Caco-2 (cell line): ENCODE measurements at regions of chr7 and their contacts with region 1.

Region 1: GRCh38 chr7:92447345-92448204 is at the start of gene GATAD1:
- DNase-seq: peak; percentile 94 to 95
- H3K4me3 ChIP-seq: peak within 1 kb of the TSS; percentile 89
- H3K4me3 Mint-ChIP-seq: peak within 1 kb of the TSS; percentile 82
- H3K27ac Mint-ChIP-seq: peak within 1 kb of the TSS; percentile 86
- H3K4me1 ChIP-seq: peaks cover 16% of the 10 kb centered on the region
- H3K4me1 Mint-ChIP-seq: peaks cover 9% of the 10 kb centered on the region
- H3K27me3 ChIP-seq: no peaks in the 10 kb centered on the region
- H3K27me3 Mint-ChIP-seq: no peaks in the 10 kb centered on the region
- CTCF ChIP-seq: peak in 1 of 2 experiments; percentile 86
- total RNA-seq, gene GATAD1: 36.7 and 38.2 TPM in 2 replicates

Region 2: GRCh38 chr7:92057362-92057761 is 390.2 kb before region 1 on chr7:
- CTCF ChIA-PET with region 1: no interaction called
- POLR2A ChIA-PET with region 1: no interaction called
- intact Hi-C with region 1: loop called (anchors 5 kb)
- DNase-seq: peak; percentile 74 to 78
- H3K4me3 ChIP-seq: no peak overlapping the region
- H3K4me3 Mint-ChIP-seq: peak overlapping the region; percentile 49
- H3K27ac Mint-ChIP-seq: peak overlapping the region; percentile 55
- H3K4me1 ChIP-seq: peaks cover 51% of the 10 kb centered on the region
- H3K4me1 Mint-ChIP-seq: peaks cover 16% of the 10 kb centered on the region
- H3K27me3 ChIP-seq: no peaks in the 10 kb centered on the region
- H3K27me3 Mint-ChIP-seq: no peaks in the 10 kb centered on the region
- CTCF ChIP-seq: no peak

Region 3: GRCh38 chr7:92200791-92201190 is 246.8 kb before region 1 on chr7:
- CTCF ChIA-PET with region 1: no interaction called
- POLR2A ChIA-PET with region 1: no interaction called
- intact Hi-C with region 1: loop called (anchors 5 kb)
- DNase-seq: peak in 1 of 2 experiments; percentile 15
- H3K4me3 ChIP-seq: no peak overlapping the region
- H3K4me3 Mint-ChIP-seq: no peak overlapping the region
- H3K27ac Mint-ChIP-seq: no peak overlapping the region
- H3K4me1 ChIP-seq: no peaks in the 10 kb centered on the region; the same call in 1 of the 2 replicates
- H3K4me1 Mint-ChIP-seq: no peaks in the 10 kb centered on the region
- H3K27me3 ChIP-seq: no peaks in the 10 kb centered on the region
- H3K27me3 Mint-ChIP-seq: no peaks in the 10 kb centered on the region
- CTCF ChIP-seq: peak in 1 of 2 experiments; percentile 34

Region 4: GRCh38 chr7:92425321-92425947 is 22.1 kb before region 1 on chr7:
- CTCF ChIA-PET with region 1: interaction called, 74 read pairs
- POLR2A ChIA-PET with region 1: interaction called, 31 read pairs
- intact Hi-C with region 1: loop called (anchors 1 kb)
- DNase-seq: peak; percentile 59 to 60
- H3K4me3 ChIP-seq: peak overlapping the region; percentile 50
- H3K4me3 Mint-ChIP-seq: peak overlapping the region; percentile 54
- H3K27ac Mint-ChIP-seq: peak overlapping the region; percentile 74
- H3K4me1 ChIP-seq: no peaks in the 10 kb centered on the region
- H3K4me1 Mint-ChIP-seq: peaks cover 9% of the 10 kb centered on the region
- H3K27me3 ChIP-seq: no peaks in the 10 kb centered on the region; the same call in 1 of the 2 replicates
- H3K27me3 Mint-ChIP-seq: no peaks in the 10 kb centered on the region
- CTCF ChIP-seq: peak in 1 of 2 experiments; percentile 32

Region 5: GRCh38 chr7:92461027-92462003 is 13.7 kb after region 1 on chr7:
- CTCF ChIA-PET with region 1: interaction called, 16 read pairs
- POLR2A ChIA-PET with region 1: interaction called, 11 read pairs
- intact Hi-C with region 1: loop called (anchors 1 kb)
- DNase-seq: peak in 1 of 2 experiments; percentile 45
- H3K4me3 ChIP-seq: no peak overlapping the region
- H3K4me3 Mint-ChIP-seq: no peak overlapping the region
- H3K27ac Mint-ChIP-seq: no peak overlapping the region
- H3K4me1 ChIP-seq: peaks cover 14% of the 10 kb centered on the region
- H3K4me1 Mint-ChIP-seq: peaks cover 22% of the 10 kb centered on the region
- H3K27me3 ChIP-seq: no peaks in the 10 kb centered on the region
- H3K27me3 Mint-ChIP-seq: no peaks in the 10 kb centered on the region
- CTCF ChIP-seq: peak; percentile 73 to 87

Region 6: DNA sequence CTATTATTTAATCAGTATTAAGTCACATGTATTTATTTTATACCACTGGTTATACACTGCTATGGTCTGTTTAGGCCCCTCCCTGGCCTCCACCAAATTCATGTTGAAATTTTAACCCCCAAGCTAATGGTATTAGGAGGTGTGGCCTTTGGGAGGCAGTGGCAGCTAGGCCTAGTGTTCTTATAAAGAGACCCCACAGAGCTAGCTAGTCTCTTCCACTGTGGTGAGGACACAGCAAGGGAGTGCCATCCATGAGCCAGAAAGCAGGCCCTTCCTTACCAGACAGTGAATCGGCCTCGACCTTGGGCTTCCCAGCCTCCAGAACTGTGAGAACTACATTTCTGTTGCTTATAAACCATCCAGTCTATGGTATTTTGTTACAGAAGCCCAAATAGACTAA is 109.7 kb after region 1 on chr7:
- CTCF ChIA-PET with region 1: no interaction called
- POLR2A ChIA-PET with region 1: no interaction called
- intact Hi-C with region 1: no loop called
- DNase-seq: no peak
- H3K4me3 ChIP-seq: no peak overlapping the region
- H3K4me3 Mint-ChIP-seq: no peak overlapping the region
- H3K27ac Mint-ChIP-seq: no peak overlapping the region
- H3K4me1 ChIP-seq: peaks cover 9% of the 10 kb centered on the region
- H3K4me1 Mint-ChIP-seq: no peaks in the 10 kb centered on the region
- H3K27me3 ChIP-seq: no peaks in the 10 kb centered on the region
- H3K27me3 Mint-ChIP-seq: no peaks in the 10 kb centered on the region
- CTCF ChIP-seq: no peak

Region 7: DNA sequence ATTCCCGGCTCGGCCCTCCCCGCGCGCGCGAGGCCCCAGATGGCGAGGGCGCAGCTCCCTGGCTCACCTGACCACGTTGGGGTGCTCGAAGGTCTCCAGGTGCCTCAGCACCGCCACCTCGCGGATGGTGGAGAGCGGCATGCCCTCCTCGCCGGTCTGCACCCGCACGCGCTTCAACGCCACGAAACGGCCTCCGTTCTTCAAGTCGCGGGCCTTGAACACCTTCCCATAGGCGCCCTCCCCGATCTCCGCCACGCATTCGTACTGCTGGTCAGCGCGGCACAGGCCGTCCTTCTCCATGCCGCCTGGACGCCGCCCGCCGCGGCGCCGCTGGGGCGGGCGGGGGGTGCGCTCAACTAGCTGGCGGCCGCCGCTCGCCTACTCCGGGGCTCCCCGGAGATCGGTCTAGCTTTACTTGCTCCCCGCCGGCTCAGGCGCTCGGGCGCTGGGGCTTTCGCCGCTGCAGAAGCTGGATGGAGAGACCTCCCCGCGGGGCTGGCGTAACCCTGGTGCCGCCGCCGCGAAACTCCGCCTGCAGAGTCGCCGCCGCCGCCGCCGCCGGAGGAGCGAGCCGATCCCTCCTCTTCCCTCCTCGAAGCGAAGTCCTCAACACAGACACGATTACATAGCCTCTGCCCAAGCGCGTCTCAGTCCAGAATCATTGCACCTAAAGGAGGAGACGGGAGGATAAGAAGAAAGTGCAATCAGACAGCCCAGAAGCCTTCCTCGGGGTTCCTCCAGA is 385.6 kb after region 1 on chr7:
- CTCF ChIA-PET with region 1: interaction called, 12 read pairs
- POLR2A ChIA-PET with region 1: no interaction called
- intact Hi-C with region 1: no loop called
- DNase-seq: peak; percentile 91 to 94
- H3K4me3 ChIP-seq: peak overlapping the region; percentile 79
- H3K4me3 Mint-ChIP-seq: peak overlapping the region; percentile 86
- H3K27ac Mint-ChIP-seq: peak overlapping the region; percentile 77
- H3K4me1 ChIP-seq: peaks cover 24% of the 10 kb centered on the region
- H3K4me1 Mint-ChIP-seq: peaks cover 18% of the 10 kb centered on the region
- H3K27me3 ChIP-seq: no peaks in the 10 kb centered on the region
- H3K27me3 Mint-ChIP-seq: no peaks in the 10 kb centered on the region
- CTCF ChIP-seq: peak; percentile 91 to 93